HCT116 (cell line): ENCODE measurements at regions of chr12 and their contacts with region 1.

Region 1: DNA sequence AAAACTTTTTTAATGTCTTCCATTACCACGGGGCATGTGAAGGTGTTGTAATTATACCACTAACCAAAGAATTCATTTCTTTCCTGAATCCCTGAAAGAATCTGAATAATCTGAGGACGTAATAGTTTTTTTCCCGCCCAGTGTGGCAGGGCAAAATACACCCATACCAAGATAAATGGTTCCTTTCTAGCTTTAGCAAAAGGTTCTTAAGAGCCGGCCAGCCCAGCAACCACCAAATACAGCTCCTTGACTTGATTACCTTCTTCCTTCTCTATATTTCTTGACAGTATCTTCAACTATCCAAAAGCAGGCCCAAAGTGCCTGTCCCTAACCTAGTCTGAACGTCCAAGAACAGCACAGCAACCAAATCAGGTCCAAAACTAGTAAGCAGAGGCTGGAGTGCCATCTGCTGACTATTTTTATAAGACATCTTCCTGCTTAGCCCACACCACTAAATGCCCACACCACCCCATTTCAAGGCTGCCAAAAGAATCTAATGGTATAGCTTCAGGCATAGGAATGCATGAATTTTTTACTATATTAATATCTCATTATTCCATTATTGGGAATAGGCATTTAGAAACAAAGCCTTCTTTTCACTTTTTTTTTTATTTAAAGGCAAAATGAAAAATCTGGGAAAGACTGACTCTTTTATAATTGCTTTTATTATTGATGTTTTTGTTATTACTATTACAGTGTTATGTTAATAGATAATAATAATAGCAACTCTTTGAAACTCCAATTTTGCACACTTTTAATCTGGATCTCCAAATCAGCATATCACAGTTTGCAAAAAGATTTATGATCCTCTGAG is 524.4 kb downstream of the MED13L start:
- DNase-seq: peak; percentile 42
- ATAC-seq: peak; percentile 98
- H3K4me3 ChIP-seq: no peak overlapping the region
- H3K27ac ChIP-seq: no peak overlapping the region
- H3K4me1 ChIP-seq: no peaks in the 10 kb centered on the region
- H3K27me3 ChIP-seq: peaks cover 51% of the 10 kb centered on the region
- CTCF ChIP-seq: peak; percentile 44 to 66 (median 65); a peak in 4 of 6 replicates
- POLR2A ChIP-seq: no peak
- RAD21 ChIP-seq: peak; percentile 90

Region 2: DNA sequence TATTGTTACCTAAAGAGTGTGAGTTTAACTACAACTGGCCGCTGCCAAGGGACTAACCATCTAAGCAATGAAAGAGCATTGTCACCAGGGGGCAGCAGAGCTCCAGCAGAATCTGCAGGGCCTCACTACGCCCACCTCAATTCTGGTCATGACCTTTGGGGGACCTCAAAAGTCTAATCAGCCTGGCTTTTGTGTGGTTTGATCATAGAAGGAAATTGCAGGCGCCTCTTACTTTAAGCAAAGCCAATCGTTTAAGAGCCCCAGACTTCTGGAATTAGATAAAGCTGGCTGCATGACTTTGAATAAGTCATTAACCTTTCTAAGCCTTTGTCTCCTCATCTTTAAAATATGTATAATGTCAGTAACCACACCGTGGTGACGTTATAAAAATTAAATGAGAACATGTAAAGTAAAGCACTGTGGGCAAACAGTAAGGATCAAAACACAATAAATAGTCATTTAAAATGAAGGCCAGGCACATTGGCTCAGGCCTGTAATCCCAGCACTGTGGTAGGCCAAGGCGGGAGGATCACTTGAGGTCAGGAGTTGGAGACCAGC is 1127.7 kb before region 1 on chr12:
- CTCF ChIA-PET with region 1: interaction called, 3 read pairs
- POLR2A ChIA-PET with region 1: no interaction called
- RAD21 ChIA-PET with region 1: no interaction called
- intact Hi-C with region 1: loop called (anchors 1 kb)
- DNase-seq: peak; percentile 52
- ATAC-seq: peak; percentile 89
- H3K4me3 ChIP-seq: no peak overlapping the region
- H3K27ac ChIP-seq: no peak overlapping the region
- H3K4me1 ChIP-seq: peaks cover 12 to 18% of the 10 kb centered on the region in 2 experiments; a peak in 3 of 4 replicates
- H3K27me3 ChIP-seq: no peaks in the 10 kb centered on the region
- CTCF ChIP-seq: peak; percentile 73 to 89 (median 87)
- POLR2A ChIP-seq: no peak
- RAD21 ChIP-seq: peak; percentile 85

Region 3: DNA sequence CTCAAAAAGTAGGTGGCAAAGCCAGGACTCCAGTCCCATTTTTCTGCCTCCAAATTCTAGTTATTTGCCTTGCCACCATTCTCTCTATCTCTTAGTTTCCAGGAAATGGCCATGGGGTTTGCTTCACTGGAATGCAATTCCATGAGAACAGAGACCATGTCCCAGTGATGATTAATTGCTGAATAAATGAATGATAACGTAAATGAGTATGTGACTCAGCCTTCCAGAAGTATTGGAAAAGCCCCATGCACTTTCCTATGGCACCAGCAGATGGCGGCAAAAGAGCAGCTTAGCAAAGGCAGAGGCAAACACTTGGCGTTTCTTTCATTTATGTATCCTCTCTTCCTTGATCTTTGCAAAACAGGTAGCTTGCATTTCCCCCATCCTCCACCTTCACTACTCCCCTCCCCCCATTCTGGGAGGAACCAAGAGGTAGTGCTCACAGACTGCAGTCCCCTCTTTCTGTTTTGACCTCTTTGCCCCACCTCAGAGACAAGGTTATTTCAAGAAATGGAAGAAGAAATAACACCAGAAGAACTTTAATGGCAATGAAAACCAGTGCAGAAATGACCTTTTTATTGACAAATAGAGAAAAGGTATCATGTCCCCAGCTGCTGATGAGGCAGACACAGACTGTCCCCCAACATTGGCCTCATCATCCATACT is 1090.5 kb before region 1 on chr12:
- CTCF ChIA-PET with region 1: no interaction called
- POLR2A ChIA-PET with region 1: no interaction called
- RAD21 ChIA-PET with region 1: no interaction called
- intact Hi-C with region 1: loop called (anchors 1 kb)
- DNase-seq: peak; percentile 57
- ATAC-seq: peak; percentile 77
- H3K4me3 ChIP-seq: no peak overlapping the region
- H3K27ac ChIP-seq: no peak overlapping the region
- H3K4me1 ChIP-seq: peaks cover under 1 to 11% of the 10 kb centered on the region in 2 experiments; a peak in 3 of 4 replicates
- H3K27me3 ChIP-seq: no peaks in the 10 kb centered on the region
- CTCF ChIP-seq: peak; percentile 80 to 95 (median 81)
- POLR2A ChIP-seq: no peak
- RAD21 ChIP-seq: peak; percentile 95

Region 4: GRCh38 chr12:114668151-114668885 is 1084.8 kb before region 1 on chr12:
- CTCF ChIA-PET with region 1: interaction called, 5 read pairs
- POLR2A ChIA-PET with region 1: no interaction called
- RAD21 ChIA-PET with region 1: no interaction called
- intact Hi-C with region 1: loop called (anchors 1 kb)
- DNase-seq: peak; percentile 61
- ATAC-seq: peak; percentile 96
- H3K4me3 ChIP-seq: peak overlapping the region; percentile 35 to 54
- H3K27ac ChIP-seq: no peak overlapping the region
- H3K4me1 ChIP-seq: peaks cover 2 to 13% of the 10 kb centered on the region in 2 experiments; a peak in 2 of 4 replicates
- H3K27me3 ChIP-seq: no peaks in the 10 kb centered on the region
- CTCF ChIP-seq: peak; percentile 54 to 69 (median 58)
- POLR2A ChIP-seq: no peak
- RAD21 ChIP-seq: peak; percentile 93

Region 5: GRCh38 chr12:114933428-114934168 is 819.5 kb before region 1 on chr12:
- CTCF ChIA-PET with region 1: no interaction called
- POLR2A ChIA-PET with region 1: no interaction called
- RAD21 ChIA-PET with region 1: no interaction called
- intact Hi-C with region 1: loop called (anchors 10 kb)
- DNase-seq: peak; percentile 73
- ATAC-seq: peak; percentile 93
- H3K4me3 ChIP-seq: peak overlapping the region in 1 of 2 experiments; percentile 8; a peak in 2 of 4 replicates
- H3K27ac ChIP-seq: no peak overlapping the region
- H3K4me1 ChIP-seq: peaks cover 12 to 28% of the 10 kb centered on the region in 2 experiments
- H3K27me3 ChIP-seq: no peaks in the 10 kb centered on the region
- CTCF ChIP-seq: no peak
- POLR2A ChIP-seq: no peak
- RAD21 ChIP-seq: no peak

Region 6: DNA sequence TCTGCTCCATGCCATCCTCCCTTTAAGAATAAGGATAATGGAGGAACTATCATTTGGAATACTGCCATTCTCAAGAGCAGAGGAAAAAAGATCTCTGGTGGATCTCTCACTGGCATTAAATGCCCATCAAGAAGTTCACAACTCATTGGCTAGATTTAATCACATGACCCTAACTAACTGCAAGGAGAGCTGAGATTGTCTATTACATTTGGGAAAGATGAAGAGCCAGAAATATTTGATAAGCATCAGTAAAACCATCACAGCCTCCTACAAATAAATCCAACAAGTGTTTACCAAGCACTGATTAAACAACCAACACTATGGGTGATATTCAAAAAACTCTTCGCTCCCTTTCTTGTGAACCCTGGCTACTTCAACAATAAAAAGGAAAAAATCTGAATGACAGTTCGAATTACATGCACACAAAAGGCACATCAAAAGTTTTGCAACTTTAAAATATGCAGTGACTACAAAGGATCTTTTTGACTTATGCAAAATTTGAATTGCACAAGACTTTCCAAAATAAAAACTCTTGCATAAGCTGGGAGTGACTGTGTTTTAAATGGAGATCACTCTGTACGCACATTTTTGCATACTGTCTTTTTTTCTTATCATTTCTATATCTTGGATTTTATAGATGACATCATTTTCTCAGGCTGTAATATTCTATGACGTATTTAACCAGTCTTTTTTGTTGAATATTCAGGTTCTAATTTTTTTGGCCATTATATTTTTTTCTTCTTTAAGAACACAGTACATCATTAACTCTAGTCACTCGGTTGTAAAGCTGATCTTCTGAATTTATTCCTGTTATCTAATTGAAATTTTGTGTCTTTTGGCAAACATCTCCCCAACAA is 401.7 kb before region 1 on chr12:
- CTCF ChIA-PET with region 1: no interaction called
- POLR2A ChIA-PET with region 1: no interaction called
- RAD21 ChIA-PET with region 1: no interaction called
- intact Hi-C with region 1: no loop called
- DNase-seq: no peak
- ATAC-seq: no peak
- H3K4me3 ChIP-seq: no peak overlapping the region
- H3K27ac ChIP-seq: no peak overlapping the region
- H3K4me1 ChIP-seq: peaks cover 0 to 15% of the 10 kb centered on the region in 2 experiments; a peak in 2 of 4 replicates
- H3K27me3 ChIP-seq: no peaks in the 10 kb centered on the region
- CTCF ChIP-seq: no peak
- POLR2A ChIP-seq: no peak
- RAD21 ChIP-seq: no peak

Region 7: DNA sequence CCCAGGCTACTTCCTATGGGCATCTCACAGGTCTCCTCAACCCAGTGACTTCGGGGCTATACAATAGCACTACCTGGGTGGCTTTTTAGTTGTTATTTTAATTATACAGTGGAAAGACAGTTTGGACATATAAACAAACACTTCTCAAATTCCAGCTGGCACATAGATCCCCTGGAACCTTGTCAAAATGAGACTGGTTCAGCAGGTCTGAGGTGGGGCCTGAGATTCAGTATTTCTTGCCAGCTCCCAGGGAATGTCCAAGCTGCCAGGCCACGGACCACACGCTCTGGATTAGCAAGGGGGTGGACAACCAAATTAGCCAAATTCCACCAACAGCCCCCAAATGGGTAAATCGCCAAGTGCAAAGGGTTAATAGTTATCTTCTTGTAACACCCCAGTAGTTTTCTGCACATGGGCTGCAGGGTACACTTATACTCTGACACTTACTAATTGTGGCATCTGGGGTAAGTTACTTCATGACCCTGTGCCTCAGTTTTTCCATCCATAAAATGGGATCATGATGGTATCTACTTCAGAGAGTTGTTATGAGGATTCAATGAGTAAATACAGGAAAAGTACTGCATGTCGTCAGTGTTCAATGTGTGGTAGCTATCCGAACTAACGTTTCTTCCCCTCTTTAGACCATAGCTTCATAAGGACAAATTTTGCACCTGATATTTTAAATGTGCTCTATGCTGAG is 279.7 kb before region 1 on chr12:
- CTCF ChIA-PET with region 1: no interaction called
- POLR2A ChIA-PET with region 1: no interaction called
- RAD21 ChIA-PET with region 1: no interaction called
- intact Hi-C with region 1: loop called (anchors 5 kb)
- DNase-seq: no peak
- ATAC-seq: no peak
- H3K4me3 ChIP-seq: no peak overlapping the region
- H3K27ac ChIP-seq: peak overlapping the region; percentile 45
- H3K4me1 ChIP-seq: peaks cover 18 to 34% of the 10 kb centered on the region in 2 experiments; a peak in 3 of 4 replicates
- H3K27me3 ChIP-seq: no peaks in the 10 kb centered on the region
- CTCF ChIP-seq: no peak
- POLR2A ChIP-seq: no peak
- RAD21 ChIP-seq: no peak

Region 8: DNA sequence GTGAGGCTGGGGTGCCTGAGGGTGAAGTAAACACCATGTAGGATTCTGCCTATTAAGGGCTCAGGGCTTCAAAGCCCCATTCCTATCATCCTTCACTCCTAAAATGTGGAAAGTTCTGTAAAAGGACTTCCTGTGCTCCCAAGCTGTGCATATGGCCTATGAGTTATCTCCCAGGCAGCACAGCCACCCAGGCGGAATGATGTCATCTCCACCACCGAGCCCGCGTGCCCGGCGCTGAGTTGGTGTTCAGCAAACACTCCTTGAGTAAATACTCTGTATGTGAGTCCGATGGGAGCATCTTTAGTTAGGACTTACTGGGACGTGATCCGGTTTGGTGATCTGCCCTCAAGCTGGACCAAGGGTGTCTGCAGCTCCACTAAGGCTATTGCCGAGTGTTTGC is 87.0 kb after region 1 on chr12:
- CTCF ChIA-PET with region 1: no interaction called
- POLR2A ChIA-PET with region 1: no interaction called
- RAD21 ChIA-PET with region 1: no interaction called
- intact Hi-C with region 1: no loop called
- DNase-seq: no peak
- ATAC-seq: no peak
- H3K4me3 ChIP-seq: no peak overlapping the region
- H3K27ac ChIP-seq: no peak overlapping the region
- H3K4me1 ChIP-seq: no peaks in the 10 kb centered on the region
- H3K27me3 ChIP-seq: no peaks in the 10 kb centered on the region
- CTCF ChIP-seq: no peak
- POLR2A ChIP-seq: no peak
- RAD21 ChIP-seq: no peak

Region 9: DNA sequence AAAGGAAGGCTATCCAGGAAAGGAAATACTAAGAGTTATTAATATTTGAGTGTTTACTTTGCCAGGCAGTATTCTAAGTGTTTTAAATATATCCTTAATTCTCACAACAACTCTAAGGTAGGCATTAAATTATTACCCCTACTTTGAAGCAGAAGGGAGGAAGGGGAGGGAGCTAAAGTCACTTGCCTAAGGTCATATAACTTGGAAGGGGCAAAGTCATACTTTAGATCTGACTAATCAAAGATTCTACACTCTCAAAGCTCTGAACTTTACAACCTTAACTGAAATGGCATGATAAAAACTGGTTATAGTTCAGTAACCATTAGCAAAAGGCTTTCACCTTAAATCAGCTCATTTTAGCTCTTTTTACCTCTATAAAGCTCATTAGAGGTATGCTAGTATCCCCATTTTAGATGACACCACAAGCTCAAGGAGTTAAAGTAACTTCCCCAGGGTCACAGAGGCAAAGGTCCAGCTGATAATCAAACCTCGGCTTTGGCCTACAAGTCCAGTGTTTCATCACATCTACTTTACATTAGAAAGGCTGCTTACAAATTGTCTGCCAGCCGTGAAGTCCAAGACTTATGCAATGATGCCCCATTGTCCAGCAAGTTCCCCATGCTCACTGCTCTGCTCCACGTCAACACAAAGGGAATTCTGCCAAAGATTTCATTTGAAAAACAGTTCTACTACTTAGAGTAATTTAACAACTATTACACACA is 300.5 kb after region 1 on chr12:
- CTCF ChIA-PET with region 1: no interaction called
- POLR2A ChIA-PET with region 1: no interaction called
- RAD21 ChIA-PET with region 1: no interaction called
- intact Hi-C with region 1: no loop called
- DNase-seq: no peak
- ATAC-seq: no peak
- H3K4me3 ChIP-seq: no peak overlapping the region
- H3K27ac ChIP-seq: no peak overlapping the region
- H3K4me1 ChIP-seq: peaks cover 6 to 21% of the 10 kb centered on the region in 2 experiments; a peak in 3 of 4 replicates
- H3K27me3 ChIP-seq: no peaks in the 10 kb centered on the region
- CTCF ChIP-seq: no peak
- POLR2A ChIP-seq: no peak
- RAD21 ChIP-seq: no peak